GM18951 (cell line): ENCODE measurements at regions of chr6 and their contacts with region 1.

Region 1: DNA sequence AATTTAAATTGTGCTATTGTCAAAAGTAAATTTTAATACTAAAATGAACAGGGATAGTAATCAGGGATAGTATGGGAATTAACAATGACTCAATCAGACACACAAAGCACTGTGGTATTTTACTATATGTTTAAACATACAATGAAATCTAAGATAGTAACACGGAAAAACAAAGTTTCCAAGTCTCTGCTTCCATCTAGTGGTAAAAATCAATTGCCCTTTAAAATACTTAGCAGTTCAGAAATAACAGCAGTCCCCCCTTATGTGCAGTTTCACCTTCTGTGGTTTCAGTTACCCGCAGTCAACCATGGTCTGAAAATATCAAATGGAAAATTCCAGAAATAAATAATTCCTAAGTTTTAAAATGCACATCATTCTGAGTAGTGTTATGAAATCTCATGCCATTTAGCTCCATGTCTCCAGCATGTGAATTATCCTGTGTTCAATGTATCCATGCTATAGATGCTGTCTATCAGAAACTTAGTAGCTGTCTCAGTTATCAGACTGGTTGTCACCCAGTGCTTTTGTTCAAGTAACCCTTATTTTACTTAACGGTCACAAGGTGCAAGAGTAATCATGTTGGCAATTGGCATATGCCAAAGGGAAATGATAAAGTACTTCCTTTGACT is 58.5 kb downstream of the AHI1 start:
- POLR2A ChIP-seq: no peak

Region 2: GRCh38 chr6:134174672-134175198 is 1264.3 kb before region 1 on chr6:
- in situ Hi-C with region 1: loop called (anchors 25 kb)
- POLR2A ChIP-seq: peak; percentile 99

Region 3: DNA sequence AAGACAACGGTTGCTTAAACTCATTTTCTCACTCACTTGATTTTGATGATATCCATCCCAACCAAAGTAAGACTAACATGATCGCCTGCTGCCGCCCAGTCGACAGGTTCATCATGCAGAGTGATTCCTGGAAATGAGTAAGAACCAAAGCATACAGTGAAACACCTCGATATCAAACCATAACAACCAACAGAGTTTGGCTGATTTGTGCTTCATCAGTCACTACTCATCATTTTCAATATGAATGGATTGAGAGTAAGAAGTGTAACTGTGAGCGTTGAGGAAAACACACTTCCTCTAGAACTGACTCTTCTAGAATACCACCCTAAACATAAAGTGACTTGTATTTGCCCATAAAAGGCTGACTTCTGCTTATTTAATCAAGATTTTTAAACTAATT is 459.9 kb before region 1 on chr6:
- in situ Hi-C with region 1: loop called (anchors 25 kb)
- POLR2A ChIP-seq: no peak